ENCODE measurements at regions of chr3 and their contacts with region 1.

Region 1: DNA sequence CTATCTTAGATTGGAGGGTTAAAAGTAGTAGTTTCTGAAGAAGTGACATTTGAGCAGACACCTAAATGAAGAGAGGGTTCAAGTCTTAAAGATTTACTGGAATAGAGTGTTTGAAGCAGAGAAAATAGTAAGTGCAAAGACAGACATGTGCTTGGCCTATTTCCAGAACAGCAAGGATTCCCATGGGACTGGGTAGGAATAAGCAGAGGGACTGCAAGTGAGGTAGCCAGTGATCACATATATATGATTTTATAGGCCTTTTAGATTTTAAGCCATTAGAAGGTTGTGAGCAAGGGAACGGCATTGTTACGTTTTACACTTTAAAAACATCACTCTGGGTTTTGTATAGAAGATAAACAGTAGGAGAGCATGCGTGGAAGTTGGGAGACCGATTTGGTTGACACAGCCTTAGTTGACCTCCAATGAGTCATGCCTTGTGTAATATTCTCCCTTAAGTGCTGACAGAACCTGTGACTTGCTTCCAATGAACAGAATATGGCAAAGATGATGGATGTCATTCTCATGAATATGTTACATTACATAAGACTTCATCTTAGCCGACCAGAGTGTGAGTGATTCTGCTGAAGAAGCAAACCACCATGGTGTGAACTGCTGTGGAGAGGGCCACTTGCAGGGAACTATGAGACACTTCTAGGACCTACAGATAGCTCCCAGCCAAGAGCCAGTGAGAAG is 37.1 kb upstream of the SLC4A7 start:
- DNase-seq: no peak
- ATAC-seq: no peak
- H3K4me3 ChIP-seq: no peak overlapping the region
- H3K4me3 Mint-ChIP-seq: no peak overlapping the region
- H3K27ac ChIP-seq: no peak overlapping the region
- H3K27ac Mint-ChIP-seq: no peak overlapping the region
- H3K4me1 ChIP-seq: no peaks in the 10 kb centered on the region
- H3K4me1 Mint-ChIP-seq: no peaks in the 10 kb centered on the region
- H3K27me3 ChIP-seq: no peaks in the 10 kb centered on the region
- H3K27me3 Mint-ChIP-seq: no peaks in the 10 kb centered on the region

Region 2: GRCh38 chr3:27425896-27426565 is 95.3 kb before region 1 on chr3:
- CTCF ChIA-PET with region 1: no interaction called
- POLR2A ChIA-PET with region 1: interaction called in 1 of 2 experiments, 10 read pairs
- DNase-seq: no peak
- ATAC-seq: no peak
- H3K4me3 ChIP-seq: no peak overlapping the region
- H3K4me3 Mint-ChIP-seq: no peak overlapping the region
- H3K27ac ChIP-seq: no peak overlapping the region
- H3K27ac Mint-ChIP-seq: no peak overlapping the region
- H3K4me1 ChIP-seq: no peaks in the 10 kb centered on the region
- H3K4me1 Mint-ChIP-seq: peaks cover 0 to 4% (median 2%) of the 10 kb centered on the region in 3 donors
- H3K27me3 ChIP-seq: no peaks in the 10 kb centered on the region
- H3K27me3 Mint-ChIP-seq: no peaks in the 10 kb centered on the region

Region 3: DNA sequence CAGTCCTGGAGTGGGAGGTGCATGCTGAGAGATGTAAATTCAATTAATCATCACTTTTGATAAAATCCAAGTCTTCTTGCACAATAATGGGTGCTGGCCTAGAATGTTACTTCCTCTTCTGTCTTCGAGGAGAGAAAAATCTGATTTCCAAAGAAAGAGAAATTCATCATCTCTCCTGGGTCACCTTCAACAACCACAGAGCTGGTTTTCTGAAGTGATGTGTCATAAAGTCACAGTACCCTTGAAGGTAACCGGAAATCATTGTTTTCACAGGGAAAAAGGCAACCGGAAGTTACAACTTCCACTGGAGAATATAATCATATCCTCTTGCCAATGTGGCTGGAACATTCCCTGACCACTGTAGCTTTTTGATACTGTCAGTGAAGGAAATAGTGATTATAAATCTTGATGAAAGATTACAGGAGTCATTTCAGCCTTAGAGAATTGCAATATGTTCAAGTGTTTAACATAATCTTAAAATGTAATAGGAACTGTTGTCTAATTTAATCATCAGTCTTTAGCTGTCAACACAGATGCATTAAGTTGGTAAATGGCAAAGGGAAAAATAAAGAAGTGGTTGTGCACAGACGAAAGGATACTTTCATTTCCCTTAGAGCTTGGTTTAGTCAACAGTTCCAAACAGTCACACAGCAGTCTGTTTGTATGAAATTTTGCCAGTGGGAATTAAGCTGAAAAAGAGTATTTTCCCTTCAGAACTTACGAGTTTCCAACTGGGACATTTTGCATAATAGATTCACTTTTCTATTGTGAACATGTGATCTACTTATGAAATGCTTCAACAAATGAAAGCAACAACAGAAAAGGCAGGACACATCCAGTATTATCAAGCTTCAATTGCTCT is 69.3 kb after region 1 on chr3:
- CTCF ChIA-PET with region 1: no interaction called
- POLR2A ChIA-PET with region 1: no interaction called
- DNase-seq: peak in 1 of 35 experiments; percentile 27
- ATAC-seq: peak in 2 of 4 experiments; percentile 38 to 52
- H3K4me3 ChIP-seq: no peak overlapping the region
- H3K4me3 Mint-ChIP-seq: peak overlapping the region in 1 of 3 donors; percentile 52
- H3K27ac ChIP-seq: peak overlapping the region; percentile 41
- H3K27ac Mint-ChIP-seq: peak overlapping the region; percentile 77 to 91
- H3K4me1 ChIP-seq: peaks cover 18 to 19% of the 10 kb centered on the region in 2 experiments
- H3K4me1 Mint-ChIP-seq: peaks cover 26 to 30% (median 28%) of the 10 kb centered on the region in 3 donors
- H3K27me3 ChIP-seq: no peaks in the 10 kb centered on the region
- H3K27me3 Mint-ChIP-seq: no peaks in the 10 kb centered on the region

Region 4: DNA sequence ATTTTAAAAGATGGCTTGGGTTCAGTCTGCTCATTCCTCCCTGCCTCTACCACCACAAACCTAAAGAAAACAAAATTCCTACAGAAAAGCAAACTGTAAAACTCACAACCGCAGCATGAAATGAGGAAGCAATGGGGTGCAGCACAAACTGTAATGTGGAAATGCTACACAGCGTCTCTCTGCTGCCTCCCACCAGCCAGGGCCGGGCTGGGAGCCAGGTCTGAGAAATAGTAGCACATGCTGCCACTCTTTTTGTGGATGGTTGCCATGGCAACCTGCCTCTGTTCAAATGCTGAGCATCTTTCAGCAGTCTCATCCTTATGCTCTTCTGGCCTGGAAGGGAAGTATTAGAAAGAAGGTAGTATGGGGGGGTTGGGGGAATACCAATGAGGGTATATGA is 145.4 kb after region 1 on chr3:
- CTCF ChIA-PET with region 1: interaction called, 5 to 10 read pairs
- POLR2A ChIA-PET with region 1: no interaction called
- DNase-seq: peak in 9 of 35 experiments; percentile 1 to 40 (median 12)
- ATAC-seq: peak in 2 of 4 experiments; percentile 46 to 49
- H3K4me3 ChIP-seq: no peak overlapping the region
- H3K4me3 Mint-ChIP-seq: no peak overlapping the region
- H3K27ac ChIP-seq: no peak overlapping the region
- H3K27ac Mint-ChIP-seq: peak overlapping the region in 1 of 2 donors; percentile 28
- H3K4me1 ChIP-seq: peaks cover 0 to 5% of the 10 kb centered on the region in 2 experiments
- H3K4me1 Mint-ChIP-seq: peaks cover 7 to 10% (median 9%) of the 10 kb centered on the region in 3 donors
- H3K27me3 ChIP-seq: no peaks in the 10 kb centered on the region
- H3K27me3 Mint-ChIP-seq: no peaks in the 10 kb centered on the region

Region 5: GRCh38 chr3:27827041-27827440 is 305.7 kb after region 1 on chr3:
- CTCF ChIA-PET with region 1: no interaction called
- POLR2A ChIA-PET with region 1: interaction called in 1 of 2 experiments, 10 read pairs
- DNase-seq: no peak
- ATAC-seq: no peak
- H3K4me3 ChIP-seq: no peak overlapping the region
- H3K4me3 Mint-ChIP-seq: no peak overlapping the region
- H3K27ac ChIP-seq: no peak overlapping the region
- H3K27ac Mint-ChIP-seq: no peak overlapping the region
- H3K4me1 ChIP-seq: peaks cover 0 to 3% of the 10 kb centered on the region in 2 experiments
- H3K4me1 Mint-ChIP-seq: peaks cover 15% of the 10 kb centered on the region in 3 donors
- H3K27me3 ChIP-seq: no peaks in the 10 kb centered on the region
- H3K27me3 Mint-ChIP-seq: no peaks in the 10 kb centered on the region

Measured in T-cell (primary cell).